GM12878 (cell line): ENCODE measurements at regions of chr7 and their contacts with region 1.

Region 1: DNA sequence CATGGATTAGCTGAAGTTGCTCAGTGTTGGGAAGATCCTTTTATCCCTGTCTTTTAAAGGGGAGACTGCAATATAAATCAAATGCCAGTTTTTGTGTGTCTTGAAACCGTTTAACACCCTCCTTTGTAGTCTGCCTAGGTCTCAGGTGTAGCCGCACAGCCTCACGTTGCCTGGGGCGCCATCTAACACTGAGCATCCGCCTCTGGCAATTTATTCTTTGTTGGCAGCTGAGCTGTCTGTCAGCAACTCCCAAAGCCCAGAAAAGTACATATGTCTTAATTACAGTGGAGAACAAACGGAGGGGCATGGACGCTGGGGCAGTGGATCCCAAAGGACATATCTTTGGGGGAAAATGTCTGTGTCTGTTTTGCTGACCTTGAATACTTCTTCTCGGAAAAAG is 254.7 kb downstream of the STK31 start:
- DNase-seq: no peak
- ATAC-seq: no peak
- H3K4me3 ChIP-seq: no peak overlapping the region
- H3K27ac ChIP-seq: no peak overlapping the region
- H3K4me1 ChIP-seq: no peaks in the 10 kb centered on the region
- H3K27me3 ChIP-seq: no peaks in the 10 kb centered on the region
- CTCF ChIP-seq: no peak
- EP300 ChIP-seq: no peak
- POLR2A ChIP-seq: no peak
- RAD21 ChIP-seq: no peak

Region 2: GRCh38 chr7:23767514-23767913 is 197.2 kb before region 1 on chr7:
- CTCF ChIA-PET with region 1: no interaction called
- POLR2A ChIA-PET with region 1: no interaction called
- RAD21 ChIA-PET with region 1: no interaction called
- SMC1A ChIA-PET with region 1: no interaction called
- in situ Hi-C with region 1: no loop called
- intact Hi-C with region 1: no loop called
- DNase-seq: no peak
- ATAC-seq: no peak
- H3K4me3 ChIP-seq: no peak overlapping the region
- H3K27ac ChIP-seq: no peak overlapping the region
- H3K4me1 ChIP-seq: no peaks in the 10 kb centered on the region
- H3K27me3 ChIP-seq: no peaks in the 10 kb centered on the region
- CTCF ChIP-seq: no peak
- EP300 ChIP-seq: no peak
- POLR2A ChIP-seq: no peak
- RAD21 ChIP-seq: no peak

Region 3: DNA sequence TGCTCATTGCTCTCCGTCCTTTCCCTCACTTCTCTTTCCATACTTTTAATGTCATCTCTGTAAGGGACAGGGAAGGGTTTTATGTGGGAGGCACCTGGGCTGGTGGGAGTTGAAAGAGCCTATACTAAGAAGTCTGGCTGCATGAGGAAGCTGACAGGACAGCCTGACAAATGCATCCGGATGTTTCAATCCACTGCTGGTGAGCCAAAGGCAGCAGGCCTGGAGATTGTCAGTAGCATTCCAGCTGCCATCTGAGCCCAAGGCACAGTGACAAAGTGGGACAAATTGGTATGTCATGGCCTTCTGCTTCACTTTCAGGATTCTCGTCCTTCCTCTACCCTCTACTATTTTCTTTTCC is 36.3 kb before region 1 on chr7:
- CTCF ChIA-PET with region 1: no interaction called
- POLR2A ChIA-PET with region 1: no interaction called
- RAD21 ChIA-PET with region 1: no interaction called
- SMC1A ChIA-PET with region 1: no interaction called
- in situ Hi-C with region 1: no loop called
- intact Hi-C with region 1: no loop called
- DNase-seq: no peak
- ATAC-seq: no peak
- H3K4me3 ChIP-seq: no peak overlapping the region
- H3K27ac ChIP-seq: no peak overlapping the region
- H3K4me1 ChIP-seq: no peaks in the 10 kb centered on the region
- H3K27me3 ChIP-seq: no peaks in the 10 kb centered on the region; a peak in 1 of 4 replicates
- CTCF ChIP-seq: no peak
- EP300 ChIP-seq: no peak
- POLR2A ChIP-seq: no peak
- RAD21 ChIP-seq: no peak

Region 4: GRCh38 chr7:24010495-24010894 is 45.8 kb after region 1 on chr7:
- CTCF ChIA-PET with region 1: no interaction called
- POLR2A ChIA-PET with region 1: no interaction called
- RAD21 ChIA-PET with region 1: no interaction called
- SMC1A ChIA-PET with region 1: interaction called, 4 read pairs
- in situ Hi-C with region 1: no loop called
- intact Hi-C with region 1: loop called (anchors 5 kb)
- DNase-seq: no peak
- ATAC-seq: no peak
- H3K4me3 ChIP-seq: no peak overlapping the region
- H3K27ac ChIP-seq: no peak overlapping the region
- H3K4me1 ChIP-seq: no peaks in the 10 kb centered on the region
- H3K27me3 ChIP-seq: no peaks in the 10 kb centered on the region
- CTCF ChIP-seq: no peak
- EP300 ChIP-seq: no peak
- POLR2A ChIP-seq: no peak
- RAD21 ChIP-seq: no peak